PC-9 (cell line): ENCODE measurements at regions of chr10 and their contacts with region 1.

Region 1: GRCh38 chr10:69232252-69232651 is 12.1 kb downstream of the HKDC1 start:
- DNase-seq: peak; percentile 88 to 96
- H3K4me3 ChIP-seq: peak overlapping the region; percentile 72
- H3K27ac ChIP-seq: peak overlapping the region; percentile 96
- H3K4me1 ChIP-seq: peaks cover 73% of the 10 kb centered on the region
- H3K27me3 ChIP-seq: no peaks in the 10 kb centered on the region
- CTCF ChIP-seq: no peak

Region 2: DNA sequence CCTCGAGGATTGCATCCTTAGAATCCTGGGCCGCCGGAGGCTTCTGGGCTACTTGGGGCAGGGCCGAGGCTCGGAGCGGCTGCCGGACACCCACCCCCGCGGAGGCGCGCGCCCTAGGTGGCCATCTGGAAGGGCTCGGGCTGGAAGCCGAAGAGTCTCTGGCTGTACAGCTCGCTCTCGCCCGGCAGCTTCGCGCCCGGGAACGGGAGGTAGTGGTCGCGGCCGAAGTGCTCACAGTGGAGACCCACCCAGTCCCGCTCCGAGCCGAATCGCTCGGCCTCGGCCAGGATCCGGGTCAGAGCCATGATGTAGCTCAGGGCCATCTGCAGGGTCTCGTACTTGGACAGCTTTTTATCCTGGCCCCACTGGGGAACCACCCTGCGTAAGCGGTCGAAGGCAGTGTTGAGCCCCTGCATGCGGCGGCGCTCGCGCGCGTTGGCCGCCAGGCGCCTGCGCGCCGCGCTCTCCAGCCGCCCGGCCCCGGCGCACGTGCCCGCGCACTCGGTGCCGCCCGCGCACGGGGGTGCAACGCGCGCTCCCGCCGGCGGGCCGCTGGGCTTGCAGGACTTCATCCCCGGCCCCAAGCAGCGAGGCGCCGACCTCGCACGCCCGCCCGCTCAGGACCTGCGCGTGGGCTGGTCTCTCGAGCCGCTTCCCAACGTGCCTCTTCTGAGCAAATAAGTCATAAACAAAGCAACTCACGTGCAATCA is 1001.0 kb before region 1 on chr10:
- CTCF ChIA-PET with region 1: no interaction called
- POLR2A ChIA-PET with region 1: no interaction called
- intact Hi-C with region 1: no loop called
- DNase-seq: peak; percentile 39 to 75
- H3K4me3 ChIP-seq: peak overlapping the region; percentile 56
- H3K27ac ChIP-seq: no peak overlapping the region
- H3K4me1 ChIP-seq: peaks cover 15% of the 10 kb centered on the region
- H3K27me3 ChIP-seq: no peaks in the 10 kb centered on the region
- CTCF ChIP-seq: no peak; the same call in 1 of the 2 replicates

Region 3: GRCh38 chr10:69217119-69217754 is 15.0 kb before region 1 on chr10:
- CTCF ChIA-PET with region 1: interaction called, 8 read pairs
- POLR2A ChIA-PET with region 1: interaction called, 6 read pairs
- intact Hi-C with region 1: loop called (anchors 1 kb)
- DNase-seq: peak; percentile 40 to 99
- H3K4me3 ChIP-seq: no peak overlapping the region
- H3K27ac ChIP-seq: peak overlapping the region; percentile 97
- H3K4me1 ChIP-seq: peaks cover 43% of the 10 kb centered on the region
- H3K27me3 ChIP-seq: no peaks in the 10 kb centered on the region
- CTCF ChIP-seq: no peak

Region 4: GRCh38 chr10:69318106-69318866 is 86.0 kb after region 1 on chr10:
- CTCF ChIA-PET with region 1: no interaction called
- POLR2A ChIA-PET with region 1: no interaction called
- intact Hi-C with region 1: loop called (anchors 5 kb)
- DNase-seq: peak; percentile 74 to 95
- H3K4me3 ChIP-seq: peak overlapping the region; percentile 97
- H3K27ac ChIP-seq: peak overlapping the region; percentile 73
- H3K4me1 ChIP-seq: peaks cover 64% of the 10 kb centered on the region
- H3K27me3 ChIP-seq: no peaks in the 10 kb centered on the region
- CTCF ChIP-seq: no peak